Mammary epithelial cell (primary cell): ENCODE measurements at regions of chr17 and their contacts with region 1.

Region 1: DNA sequence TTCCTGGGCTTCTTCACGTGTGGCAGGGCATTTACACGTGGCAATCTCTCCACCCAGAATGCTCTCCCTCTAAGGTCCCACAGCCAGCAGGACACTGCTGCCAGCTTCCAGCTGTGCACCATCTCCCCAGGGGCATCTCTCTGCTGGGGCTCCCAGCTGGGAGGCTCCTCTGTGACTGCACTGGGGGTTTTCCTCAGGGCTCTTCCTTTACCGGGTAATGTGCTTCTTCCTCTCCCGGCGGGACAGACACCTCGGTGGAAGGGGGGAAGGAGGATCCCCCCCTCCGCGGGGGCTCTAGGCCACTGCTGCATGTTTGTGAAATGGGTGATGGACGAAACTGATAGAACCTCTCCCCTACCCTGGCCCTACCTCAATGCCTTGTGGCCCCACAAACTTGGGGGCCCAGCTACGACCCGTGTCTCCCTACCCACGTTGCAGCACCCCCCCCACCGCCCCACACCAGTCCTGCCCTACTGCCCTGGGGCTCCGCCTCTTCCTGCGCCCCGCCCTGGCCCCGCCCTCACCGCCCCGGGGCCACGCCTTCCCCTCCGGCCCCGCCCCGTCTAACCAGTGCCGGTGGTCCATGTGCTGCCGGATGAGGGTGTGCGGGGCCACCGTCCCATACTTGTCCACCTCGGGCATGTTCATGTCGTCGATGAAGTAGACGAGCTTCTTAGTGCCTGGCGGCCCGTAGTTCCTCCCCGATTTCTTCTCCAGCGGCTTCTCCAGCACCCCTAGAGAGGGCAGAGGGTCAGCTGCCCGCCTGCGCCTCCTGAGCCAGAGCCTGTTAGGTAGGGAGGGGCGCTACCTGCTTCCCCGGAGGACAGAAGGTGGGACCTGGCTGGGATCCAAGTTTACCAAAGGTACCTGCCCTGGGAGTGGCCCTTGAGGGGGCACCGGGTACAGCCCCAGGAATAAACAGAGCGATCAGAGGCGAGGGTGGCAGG is 92.6 kb downstream of the DNAH17 start:
- DNase-seq: no peak
- H3K4me3 ChIP-seq: peak overlapping the region in 2 of 3 experiments; percentile 17 to 24
- H3K27ac ChIP-seq: no peak overlapping the region
- H3K4me1 ChIP-seq: peaks cover 4% of the 10 kb centered on the region
- H3K27me3 ChIP-seq: no peaks in the 10 kb centered on the region
- CTCF ChIP-seq: no peak

Region 2: GRCh38 chr17:78442648-78443128 is 41.9 kb before region 1 on chr17:
- CTCF ChIA-PET with region 1: no interaction called
- dilution Hi-C with region 1: loop called (anchors 5 kb)
- in situ Hi-C with region 1: no loop called
- intact Hi-C with region 1: no loop called
- DNase-seq: no peak
- H3K4me3 ChIP-seq: no peak overlapping the region
- H3K27ac ChIP-seq: no peak overlapping the region
- H3K4me1 ChIP-seq: no peaks in the 10 kb centered on the region
- H3K27me3 ChIP-seq: no peaks in the 10 kb centered on the region
- CTCF ChIP-seq: no peak

Region 3: DNA sequence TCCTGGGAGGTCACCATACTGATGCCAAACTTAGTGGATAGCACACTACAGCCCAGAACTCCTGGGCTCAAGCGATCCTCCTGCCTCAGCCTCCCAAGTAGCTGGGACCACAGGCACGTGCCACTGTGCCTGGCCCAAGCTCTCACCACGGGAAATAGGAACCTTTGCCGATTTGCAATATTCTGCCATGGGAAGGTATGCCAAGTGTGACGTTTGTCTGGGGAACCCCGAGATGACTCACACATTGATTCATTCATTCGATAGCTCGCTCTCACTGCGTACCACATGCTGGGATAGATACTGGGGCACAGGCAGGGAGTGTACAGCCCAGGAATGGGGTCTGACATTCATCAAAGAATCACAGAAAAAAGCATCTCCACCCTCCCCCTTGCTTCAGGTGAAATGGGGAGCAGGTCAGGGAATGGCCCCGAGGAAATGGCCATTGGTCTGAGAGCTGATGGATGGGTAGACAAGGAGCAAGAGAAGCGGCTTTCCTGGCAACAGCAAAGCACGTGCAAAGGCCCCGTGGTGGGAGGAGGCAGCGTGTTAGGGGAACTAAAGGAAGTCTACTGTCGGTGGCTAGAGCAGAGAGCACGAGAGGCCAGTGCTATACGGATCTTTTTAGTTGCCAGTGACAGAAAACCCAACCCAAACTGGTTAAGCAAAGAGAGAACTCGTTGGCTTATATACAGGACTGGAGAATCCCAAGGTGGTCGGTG is 48.5 kb after region 1 on chr17:
- CTCF ChIA-PET with region 1: no interaction called
- dilution Hi-C with region 1: loop called (anchors 5 kb)
- in situ Hi-C with region 1: no loop called
- intact Hi-C with region 1: no loop called
- DNase-seq: peak; percentile 95
- H3K4me3 ChIP-seq: no peak overlapping the region
- H3K27ac ChIP-seq: peak overlapping the region; percentile 63
- H3K4me1 ChIP-seq: peaks cover 31% of the 10 kb centered on the region
- H3K27me3 ChIP-seq: no peaks in the 10 kb centered on the region
- CTCF ChIP-seq: no peak

Region 4: DNA sequence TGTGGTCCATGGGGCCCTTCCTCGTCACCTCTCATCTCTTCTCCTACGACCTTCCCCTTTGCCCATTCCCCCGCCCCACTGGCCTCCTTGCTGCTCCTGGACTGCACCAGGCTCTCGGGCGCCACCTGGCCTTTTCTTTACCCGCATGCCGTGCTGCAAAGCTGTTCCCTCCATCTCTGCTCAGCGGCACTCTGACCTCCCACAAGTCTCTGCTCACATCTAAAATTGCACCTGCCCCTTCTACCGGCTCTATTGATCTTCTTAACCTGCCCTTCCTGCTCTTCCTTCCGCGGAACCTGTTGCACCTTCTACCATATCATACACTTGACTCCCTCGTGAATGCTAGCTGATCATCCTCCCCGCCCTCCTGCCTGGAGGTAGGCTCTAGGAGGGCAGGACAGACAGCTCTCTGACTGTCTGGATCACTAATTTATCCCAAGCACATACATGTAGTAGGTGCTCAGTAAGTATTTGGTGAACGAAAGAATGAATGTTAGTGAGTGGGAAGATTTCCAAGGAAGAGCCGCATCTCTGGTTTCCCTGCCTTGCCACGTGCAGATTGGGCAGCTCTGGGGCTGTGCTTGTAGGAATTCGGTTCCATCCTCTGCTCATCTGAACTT is 75.3 kb after region 1 on chr17:
- CTCF ChIA-PET with region 1: no interaction called
- dilution Hi-C with region 1: no loop called
- in situ Hi-C with region 1: no loop called
- intact Hi-C with region 1: no loop called
- DNase-seq: no peak
- H3K4me3 ChIP-seq: no peak overlapping the region
- H3K27ac ChIP-seq: no peak overlapping the region
- H3K4me1 ChIP-seq: peaks cover 14% of the 10 kb centered on the region
- H3K27me3 ChIP-seq: no peaks in the 10 kb centered on the region
- CTCF ChIP-seq: peak in 1 of 2 donors; percentile 31

Region 5: GRCh38 chr17:78598013-78598471 is 113.5 kb after region 1 on chr17:
- CTCF ChIA-PET with region 1: no interaction called
- dilution Hi-C with region 1: loop called (anchors 5 kb)
- in situ Hi-C with region 1: no loop called
- intact Hi-C with region 1: no loop called
- DNase-seq: peak; percentile 12
- H3K4me3 ChIP-seq: no peak overlapping the region
- H3K27ac ChIP-seq: no peak overlapping the region
- H3K4me1 ChIP-seq: no peaks in the 10 kb centered on the region
- H3K27me3 ChIP-seq: no peaks in the 10 kb centered on the region
- CTCF ChIP-seq: no peak

Region 6: DNA sequence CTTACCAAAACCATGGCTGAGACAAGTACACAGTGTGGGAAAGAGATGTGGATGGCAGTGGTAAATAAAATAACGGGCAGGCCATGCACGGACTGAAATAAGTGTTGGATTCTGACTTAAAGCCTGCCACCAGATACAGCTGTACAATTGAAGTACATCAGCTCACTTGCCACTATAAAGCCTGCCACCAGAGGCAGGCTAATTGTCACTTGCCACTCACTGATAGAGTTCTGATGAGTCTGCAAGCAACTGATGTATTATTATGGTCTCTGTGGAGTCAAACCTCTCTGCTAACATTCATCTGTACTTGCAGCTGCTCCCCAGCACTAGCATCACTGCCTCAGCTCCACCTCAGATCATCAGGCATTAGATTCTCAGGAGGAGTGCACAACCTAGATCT is 204.5 kb after region 1 on chr17:
- CTCF ChIA-PET with region 1: no interaction called
- dilution Hi-C with region 1: loop called (anchors 5 kb)
- in situ Hi-C with region 1: no loop called
- intact Hi-C with region 1: no loop called
- DNase-seq: no peak
- H3K4me3 ChIP-seq: no peak overlapping the region
- H3K27ac ChIP-seq: no peak overlapping the region
- H3K4me1 ChIP-seq: no peaks in the 10 kb centered on the region
- H3K27me3 ChIP-seq: no peaks in the 10 kb centered on the region
- CTCF ChIP-seq: peak; percentile 7 to 12

Region 7: GRCh38 chr17:78806451-78806850 is 321.9 kb after region 1 on chr17:
- CTCF ChIA-PET with region 1: no interaction called
- dilution Hi-C with region 1: loop called (anchors 5 kb)
- in situ Hi-C with region 1: no loop called
- intact Hi-C with region 1: no loop called
- DNase-seq: no peak
- H3K4me3 ChIP-seq: no peak overlapping the region
- H3K27ac ChIP-seq: no peak overlapping the region
- H3K4me1 ChIP-seq: peaks cover 4% of the 10 kb centered on the region
- H3K27me3 ChIP-seq: no peaks in the 10 kb centered on the region
- CTCF ChIP-seq: no peak